ENCODE measurements at regions of chr18 and their contacts with region 1.

Region 1: DNA sequence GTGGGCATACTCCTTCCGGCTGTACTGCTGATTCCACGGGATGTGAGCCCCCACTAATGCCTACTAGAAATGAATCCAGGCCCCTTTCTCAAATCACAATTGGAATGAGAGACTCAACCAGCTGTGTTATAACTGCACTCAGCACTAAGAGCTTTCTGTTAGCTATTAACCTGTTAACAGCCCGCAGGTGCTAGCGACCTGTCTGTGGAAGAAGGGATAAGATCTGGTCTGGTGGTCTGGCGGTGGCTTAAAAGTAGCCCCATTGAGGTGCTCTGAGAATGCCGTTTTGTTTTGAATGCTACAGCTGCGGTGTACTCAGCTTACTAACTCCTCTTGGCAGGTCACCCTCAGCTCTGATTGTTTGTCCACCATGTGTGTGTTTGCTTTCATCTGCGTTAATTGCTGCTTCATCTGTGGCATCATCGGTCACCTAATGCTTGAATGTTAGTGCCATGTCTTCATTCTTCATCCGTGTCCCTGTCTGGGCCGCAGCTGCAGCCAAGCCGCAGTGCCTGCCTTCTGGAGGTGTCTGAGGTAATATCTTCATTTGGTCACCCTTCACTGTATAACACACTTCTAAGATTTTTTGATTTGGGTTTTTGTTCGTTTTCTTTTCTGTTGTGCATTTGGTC is 16.3 kb downstream of the RAB12 start:
- DNase-seq: no peak
- ATAC-seq: no peak
- H3K4me3 ChIP-seq: no peak overlapping the region
- H3K27ac ChIP-seq: no peak overlapping the region
- H3K4me1 ChIP-seq: no peaks in the 10 kb centered on the region
- H3K27me3 ChIP-seq: no peaks in the 10 kb centered on the region
- CTCF ChIP-seq: no peak

Region 2: GRCh38 chr18:8741532-8741931 is 116.0 kb after region 1 on chr18:
- CTCF ChIA-PET with region 1: interaction called, 14 read pairs
- POLR2A ChIA-PET with region 1: no interaction called
- in situ Hi-C with region 1: no loop called
- intact Hi-C with region 1: no loop called
- DNase-seq: no peak
- ATAC-seq: no peak
- H3K4me3 ChIP-seq: no peak overlapping the region
- H3K27ac ChIP-seq: no peak overlapping the region
- H3K4me1 ChIP-seq: no peaks in the 10 kb centered on the region
- H3K27me3 ChIP-seq: no peaks in the 10 kb centered on the region
- CTCF ChIP-seq: no peak